Prostate gland (tissue), 2 donors: ENCODE measurements at regions of chr9 and their contacts with region 1.

Region 1: GRCh38 chr9:70413798-70414775 is at the start of gene KLF9:
- DNase-seq: peak; percentile 97
- H3K4me3 ChIP-seq: peak within 1 kb of the TSS; percentile 89 to 97
- H3K27ac ChIP-seq: peak within 1 kb of the TSS; percentile 100
- H3K4me1 ChIP-seq: peaks cover 9% of the 10 kb centered on the region
- H3K27me3 ChIP-seq: no peaks in the 10 kb centered on the region
- CTCF ChIP-seq: peak in 2 of 4 experiments; percentile 17 to 35
- POLR2A ChIP-seq: peak; percentile 97
- total RNA-seq, gene KLF9: 82.9 to 129 TPM

Region 2: GRCh38 chr9:70258692-70259511 is 155.2 kb before region 1 on chr9 and contains the start of gene SMC5:
- intact Hi-C with region 1: loop called (anchors 10 kb)
- DNase-seq: peak; percentile 90
- H3K4me3 ChIP-seq: peak within 1 kb of the TSS; percentile 76 to 89
- H3K27ac ChIP-seq: peak within 1 kb of the TSS; percentile 91 to 98
- H3K4me1 ChIP-seq: peaks cover 17% of the 10 kb centered on the region
- H3K27me3 ChIP-seq: no peaks in the 10 kb centered on the region
- CTCF ChIP-seq: no peak
- POLR2A ChIP-seq: peak; percentile 98
- total RNA-seq, gene SMC5: 28.7 to 29.7 TPM

Region 3: GRCh38 chr9:70484210-70485130 is 70.4 kb after region 1 on chr9:
- intact Hi-C with region 1: no loop called
- DNase-seq: peak; percentile 53
- H3K4me3 ChIP-seq: no peak overlapping the region
- H3K27ac ChIP-seq: peak overlapping the region; percentile 92 to 96
- H3K4me1 ChIP-seq: peaks cover 23% of the 10 kb centered on the region
- H3K27me3 ChIP-seq: no peaks in the 10 kb centered on the region
- CTCF ChIP-seq: peak; percentile 66 to 79 (median 68)
- POLR2A ChIP-seq: no peak

Region 4: GRCh38 chr9:70587201-70587600 is 173.1 kb after region 1 on chr9:
- intact Hi-C with region 1: loop called (anchors 1 kb)
- DNase-seq: no peak
- H3K4me3 ChIP-seq: no peak overlapping the region
- H3K27ac ChIP-seq: peak overlapping the region; percentile 55 to 74
- H3K4me1 ChIP-seq: no peaks in the 10 kb centered on the region
- H3K27me3 ChIP-seq: no peaks in the 10 kb centered on the region
- CTCF ChIP-seq: no peak
- POLR2A ChIP-seq: no peak